Right cardiac atrium (tissue), 5 donors: ENCODE measurements at regions of chr6 and their contacts with region 1.

Region 1: GRCh38 chr6:105164418-105164817 is 15.4 kb downstream of the POPDC3 start:
- DNase-seq: no peak
- ATAC-seq: peak; percentile 95
- H3K4me3 ChIP-seq: no peak overlapping the region
- H3K27ac ChIP-seq: no peak overlapping the region
- H3K4me1 ChIP-seq: no peaks in the 10 kb centered on the region
- H3K27me3 ChIP-seq: no peaks in the 10 kb centered on the region

Region 2: DNA sequence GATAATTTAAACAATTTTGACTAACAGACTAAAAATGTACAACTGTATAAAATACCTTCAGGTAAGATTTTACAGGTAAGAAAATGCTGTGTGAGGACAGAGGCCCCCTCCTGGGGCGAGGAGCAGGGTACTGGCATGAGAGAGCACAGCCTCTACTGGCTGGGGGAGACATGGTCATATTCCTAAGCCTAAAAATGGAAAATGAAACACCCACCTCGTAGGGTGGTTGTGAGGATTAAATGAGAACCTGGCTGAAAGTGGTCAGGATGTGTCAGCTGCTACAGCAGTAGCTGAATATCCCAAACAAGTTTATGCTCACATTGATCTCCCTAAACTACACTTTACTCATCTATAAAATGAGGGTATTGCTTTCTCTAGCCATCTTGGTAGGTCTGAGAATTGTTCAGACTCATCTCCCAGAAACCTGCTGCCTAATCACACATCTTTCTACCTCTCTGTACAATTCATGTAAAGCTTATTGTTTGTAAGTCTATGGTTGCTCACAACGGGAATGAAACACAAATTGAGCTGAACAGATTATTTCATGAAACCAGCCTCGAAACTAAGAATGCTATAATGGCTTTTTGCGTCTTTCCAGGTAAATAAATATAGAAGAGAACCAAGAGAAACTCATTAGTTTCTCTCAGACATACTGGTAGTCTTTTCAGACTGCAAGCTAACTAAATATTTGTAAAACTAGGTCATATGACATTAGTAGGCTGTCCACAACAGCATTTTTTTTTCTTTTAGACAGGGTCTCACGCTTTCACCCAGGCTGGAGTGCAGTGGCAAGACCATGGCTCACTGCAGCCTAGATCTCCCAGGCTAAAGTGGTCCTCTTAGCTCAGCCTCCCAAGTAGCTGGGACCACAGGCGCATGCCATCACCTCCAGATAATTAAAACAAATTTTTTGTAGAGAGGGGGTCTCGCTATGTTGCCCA is 54.2 kb before region 1 on chr6:
- intact Hi-C with region 1: loop called in 1 of 4 experiments (anchors 2 kb)
- DNase-seq: no peak
- ATAC-seq: no peak
- H3K4me3 ChIP-seq: no peak overlapping the region
- H3K27ac ChIP-seq: no peak overlapping the region
- H3K4me1 ChIP-seq: no peaks in the 10 kb centered on the region
- H3K27me3 ChIP-seq: no peaks in the 10 kb centered on the region

Region 3: DNA sequence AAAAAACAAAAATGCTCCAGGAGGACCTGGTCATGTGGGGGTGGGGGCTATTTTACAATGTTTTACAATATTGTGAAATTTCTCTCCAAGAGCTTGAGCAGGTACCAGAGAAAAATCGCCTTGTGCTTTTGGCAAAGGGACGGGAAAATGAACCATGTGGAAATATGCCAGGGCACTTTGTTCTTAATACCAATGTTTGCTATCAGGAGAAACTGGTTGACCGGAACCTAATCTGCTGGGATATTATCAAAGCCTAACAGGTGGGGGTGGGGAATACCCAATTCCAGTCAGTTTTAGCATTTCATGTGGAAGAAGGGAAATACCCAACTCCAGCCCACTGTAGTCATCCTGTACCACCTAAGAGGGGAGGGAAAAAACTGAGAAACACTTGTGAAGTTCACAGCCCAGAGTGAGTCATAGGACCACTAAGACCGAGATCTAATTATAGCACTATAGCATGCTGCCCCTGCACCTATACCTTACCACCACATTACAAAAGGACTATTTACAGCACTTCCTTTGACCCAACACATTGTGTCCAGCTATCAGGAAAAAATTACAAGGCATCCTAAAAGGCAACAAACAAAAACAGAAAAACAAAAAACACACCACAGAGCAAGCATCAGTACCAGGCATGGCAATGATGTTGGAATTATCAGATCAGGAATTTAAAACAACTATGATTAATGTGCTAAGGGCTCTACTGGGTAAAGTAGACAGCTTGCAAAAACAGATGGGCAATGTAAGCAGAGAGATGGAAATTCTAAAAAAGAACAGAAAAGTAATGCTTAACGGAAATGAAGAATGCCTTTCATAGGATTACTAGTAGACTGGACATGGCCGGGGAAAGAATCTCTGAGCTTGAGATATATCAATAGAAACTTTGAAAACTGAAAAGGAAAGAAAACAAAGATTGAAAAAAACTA is 99.5 kb after region 1 on chr6:
- intact Hi-C with region 1: loop called in 1 of 4 experiments (anchors 10 kb)
- DNase-seq: no peak
- ATAC-seq: no peak
- H3K4me3 ChIP-seq: no peak overlapping the region
- H3K27ac ChIP-seq: no peak overlapping the region
- H3K4me1 ChIP-seq: no peaks in the 10 kb centered on the region
- H3K27me3 ChIP-seq: no peaks in the 10 kb centered on the region